ENCODE measurements at regions of chr7 and their contacts with region 1.

Region 1: DNA sequence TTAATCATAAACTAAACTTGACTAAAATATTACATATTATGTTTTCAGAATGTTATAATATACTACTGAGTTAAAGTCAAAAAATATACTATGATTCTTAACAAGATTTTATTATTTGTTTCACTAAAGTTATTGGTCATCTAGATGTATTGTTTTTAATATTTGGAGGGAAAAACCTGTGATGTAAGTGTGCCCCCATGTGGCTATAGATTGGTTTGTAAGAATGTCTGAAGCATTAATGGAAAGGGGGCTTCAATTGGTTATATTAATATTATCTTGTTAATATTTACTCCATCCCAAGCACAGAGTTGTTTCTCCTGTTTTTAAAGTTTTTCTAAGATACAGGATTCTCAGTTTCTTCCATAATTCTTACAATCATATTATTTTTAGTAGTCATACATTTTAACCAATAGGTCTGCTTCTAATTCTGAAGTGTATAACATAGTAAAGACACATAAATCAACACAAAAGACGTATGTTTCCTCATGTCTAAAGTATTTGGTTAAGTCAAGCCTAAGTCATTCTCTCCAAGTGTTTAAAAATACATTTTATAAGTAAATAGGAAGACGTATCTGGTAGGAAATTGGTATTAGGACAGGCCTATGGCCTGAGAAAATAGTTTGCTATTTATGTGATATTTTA is 58.0 kb downstream of the GNAT3 start:
- DNase-seq: peak; percentile 57
- ATAC-seq: 0 out of 2 replicates have a peak, but pooled peaks have one; percentile 29
- H3K4me3 ChIP-seq: no peak overlapping the region
- H3K27ac ChIP-seq: no peak overlapping the region
- H3K4me1 ChIP-seq: peaks cover 10% of the 10 kb centered on the region
- H3K27me3 ChIP-seq: no peaks in the 10 kb centered on the region
- CTCF ChIP-seq: peak; percentile 76

Region 2: GRCh38 chr7:80060218-80060806 is 393.5 kb before region 1 on chr7:
- CTCF ChIA-PET with region 1: no interaction called
- POLR2A ChIA-PET with region 1: no interaction called
- intact Hi-C with region 1: loop called (anchors 1 kb)
- DNase-seq: peak; percentile 80
- ATAC-seq: peak; percentile 35; the same call in 1 of the 2 replicates
- H3K4me3 ChIP-seq: no peak overlapping the region
- H3K27ac ChIP-seq: no peak overlapping the region
- H3K4me1 ChIP-seq: no peaks in the 10 kb centered on the region
- H3K27me3 ChIP-seq: no peaks in the 10 kb centered on the region
- CTCF ChIP-seq: peak; percentile 68

Region 3: DNA sequence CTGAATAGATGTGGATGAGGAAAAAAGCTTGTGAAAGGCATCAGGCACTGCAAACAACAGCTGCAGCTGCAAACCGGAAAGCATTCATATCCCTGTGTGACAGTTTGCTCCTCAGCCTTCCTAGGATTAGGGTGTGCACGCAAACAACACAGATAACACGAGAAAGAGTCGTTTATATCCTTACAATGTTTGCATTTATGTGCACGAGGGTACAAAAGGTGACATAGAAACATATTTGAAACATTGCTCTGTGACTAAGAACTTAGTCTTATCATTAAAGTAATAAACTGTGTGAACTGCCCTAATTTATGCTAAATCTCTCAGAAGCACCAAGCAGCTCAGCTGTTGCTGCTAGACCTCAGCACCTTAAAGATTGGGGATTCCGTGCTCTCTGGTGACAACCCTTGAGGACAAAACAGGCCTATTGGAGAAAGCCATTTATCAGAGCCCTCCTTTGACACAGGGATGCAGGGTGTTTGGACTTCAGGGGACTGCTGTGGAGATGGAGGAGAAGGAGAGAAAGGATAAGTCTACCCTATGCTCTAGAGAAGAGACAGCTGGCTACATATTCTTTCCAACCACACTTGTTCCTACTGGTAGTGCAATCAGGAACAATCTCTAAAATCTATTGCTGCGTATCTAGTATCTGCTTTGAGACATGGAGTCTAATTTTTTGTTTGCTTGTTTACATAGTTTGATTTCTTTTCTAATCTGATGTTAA is 118.1 kb before region 1 on chr7:
- CTCF ChIA-PET with region 1: no interaction called
- POLR2A ChIA-PET with region 1: no interaction called
- intact Hi-C with region 1: no loop called
- DNase-seq: no peak
- ATAC-seq: no peak
- H3K4me3 ChIP-seq: no peak overlapping the region
- H3K27ac ChIP-seq: no peak overlapping the region
- H3K4me1 ChIP-seq: no peaks in the 10 kb centered on the region
- H3K27me3 ChIP-seq: no peaks in the 10 kb centered on the region
- CTCF ChIP-seq: no peak

Region 4: DNA sequence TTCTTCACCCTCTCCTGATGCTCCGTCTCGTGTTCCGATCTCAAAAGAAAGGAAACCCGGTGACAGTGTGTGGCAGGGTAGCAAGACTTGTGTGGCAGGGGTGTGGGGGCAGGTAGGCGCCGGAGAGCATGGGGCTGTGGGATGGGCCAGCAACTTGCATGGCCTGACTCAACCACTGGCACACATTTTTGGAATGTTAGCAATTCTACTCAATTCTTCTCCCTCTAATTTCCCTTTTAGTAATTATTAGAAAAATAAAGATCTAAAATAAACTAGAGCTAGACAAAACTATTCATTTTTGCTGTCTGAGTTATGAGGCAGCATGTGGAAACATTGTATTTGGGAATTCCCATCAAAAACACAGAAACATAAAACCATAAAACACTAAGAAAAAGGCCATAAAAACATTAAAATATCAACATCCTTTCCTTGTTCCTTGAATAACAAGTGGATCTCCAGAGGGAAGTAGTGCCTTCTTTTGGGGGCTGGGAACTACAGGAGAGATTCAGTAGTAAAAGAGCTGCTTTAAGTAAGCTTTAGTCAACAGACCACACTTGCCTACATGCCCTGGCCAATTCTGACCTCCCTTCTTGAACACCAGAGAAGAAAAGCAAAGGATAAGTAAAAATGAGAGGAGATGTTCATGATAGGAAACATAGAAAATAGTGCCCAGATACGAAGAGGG is 443.2 kb after region 1 on chr7:
- CTCF ChIA-PET with region 1: no interaction called
- POLR2A ChIA-PET with region 1: no interaction called
- intact Hi-C with region 1: no loop called
- DNase-seq: no peak
- ATAC-seq: no peak
- H3K4me3 ChIP-seq: no peak overlapping the region
- H3K27ac ChIP-seq: peak overlapping the region; percentile 31
- H3K4me1 ChIP-seq: peaks cover 44% of the 10 kb centered on the region
- H3K27me3 ChIP-seq: no peaks in the 10 kb centered on the region
- CTCF ChIP-seq: no peak

Region 5: DNA sequence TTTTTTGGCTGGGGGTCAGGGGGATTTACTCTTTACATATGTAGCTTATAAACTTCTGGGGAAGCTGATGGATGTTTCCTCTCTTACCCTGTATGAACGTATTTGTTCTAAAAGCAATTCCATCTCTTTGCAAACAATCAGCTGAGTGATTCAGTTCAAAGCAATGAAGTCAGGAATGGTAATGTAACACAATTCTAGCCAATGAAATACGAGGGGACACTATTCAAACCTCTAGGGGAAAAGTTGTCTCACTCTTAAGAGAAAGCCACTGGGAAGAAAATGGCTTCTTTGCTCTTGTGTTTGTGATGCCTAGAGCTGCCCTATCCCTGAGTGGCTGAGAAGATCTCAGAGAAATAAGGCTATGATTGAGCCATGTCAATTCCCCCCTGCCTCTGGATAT is 599.8 kb after region 1 on chr7:
- CTCF ChIA-PET with region 1: no interaction called
- POLR2A ChIA-PET with region 1: no interaction called
- intact Hi-C with region 1: no loop called
- DNase-seq: peak; percentile 75
- ATAC-seq: peak; percentile 94
- H3K4me3 ChIP-seq: no peak overlapping the region
- H3K27ac ChIP-seq: peak overlapping the region; percentile 27
- H3K4me1 ChIP-seq: peaks cover 17% of the 10 kb centered on the region
- H3K27me3 ChIP-seq: no peaks in the 10 kb centered on the region
- CTCF ChIP-seq: no peak